A549 (cell line): ENCODE measurements at regions of chr13 and their contacts with region 1.

Region 1: GRCh38 chr13:75870397-75870903 is 234.3 kb downstream of the LMO7 start:
- DNase-seq: peak; percentile 14 to 15
- ATAC-seq: peak in 1 of 2 experiments; percentile 42; a peak in 2 of 6 replicates
- H3K4me3 ChIP-seq: peak overlapping the region; percentile 41
- H3K27ac ChIP-seq: peak overlapping the region; percentile 23 to 80; a peak in 5 of 6 replicates
- H3K4me1 ChIP-seq: peaks cover under 1% of the 10 kb centered on the region; the same call in 1 of the 3 replicates
- CTCF ChIP-seq: peak; percentile 73
- EP300 ChIP-seq: no peak
- POLR2A ChIP-seq: no peak
- RAD21 ChIP-seq: peak; percentile 70 to 79

Region 2: DNA sequence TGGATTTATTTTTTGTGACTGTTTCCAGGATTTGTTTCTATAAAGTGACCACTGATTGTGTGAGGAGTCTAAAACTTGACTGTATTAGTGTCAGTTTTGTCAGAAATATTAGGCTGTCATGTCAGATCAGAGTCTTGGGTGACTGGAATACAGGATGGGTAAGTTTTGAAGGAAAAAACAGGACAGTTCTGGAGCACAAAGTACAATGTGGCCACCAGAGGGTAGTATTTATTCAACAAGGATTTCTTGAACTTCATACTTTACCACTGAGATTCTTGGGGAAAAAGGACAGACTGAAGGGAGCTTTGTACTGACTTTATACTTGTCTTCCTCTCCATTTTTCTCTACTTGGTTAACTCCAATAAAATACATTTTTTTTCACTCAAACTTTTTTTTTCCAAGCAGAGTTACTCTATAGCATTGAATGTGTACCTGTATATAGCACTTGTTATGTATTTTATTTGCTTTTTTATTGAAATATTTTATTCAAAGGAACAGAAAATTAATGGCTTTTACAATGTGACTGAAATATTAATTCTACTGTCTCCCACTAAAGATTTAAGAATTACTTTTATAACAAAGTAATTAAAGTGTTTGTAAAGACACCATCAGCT is 183.2 kb before region 1 on chr13:
- CTCF ChIA-PET with region 1: interaction called, 14 read pairs
- POLR2A ChIA-PET with region 1: no interaction called
- DNase-seq: peak in 1 of 2 experiments; percentile 54
- ATAC-seq: peak; percentile 75 to 79
- H3K4me3 ChIP-seq: no peak overlapping the region
- H3K27ac ChIP-seq: no peak overlapping the region
- H3K4me1 ChIP-seq: peaks cover 34% of the 10 kb centered on the region
- CTCF ChIP-seq: peak; percentile 62
- EP300 ChIP-seq: no peak
- POLR2A ChIP-seq: no peak
- RAD21 ChIP-seq: peak; percentile 68 to 71

Region 3: DNA sequence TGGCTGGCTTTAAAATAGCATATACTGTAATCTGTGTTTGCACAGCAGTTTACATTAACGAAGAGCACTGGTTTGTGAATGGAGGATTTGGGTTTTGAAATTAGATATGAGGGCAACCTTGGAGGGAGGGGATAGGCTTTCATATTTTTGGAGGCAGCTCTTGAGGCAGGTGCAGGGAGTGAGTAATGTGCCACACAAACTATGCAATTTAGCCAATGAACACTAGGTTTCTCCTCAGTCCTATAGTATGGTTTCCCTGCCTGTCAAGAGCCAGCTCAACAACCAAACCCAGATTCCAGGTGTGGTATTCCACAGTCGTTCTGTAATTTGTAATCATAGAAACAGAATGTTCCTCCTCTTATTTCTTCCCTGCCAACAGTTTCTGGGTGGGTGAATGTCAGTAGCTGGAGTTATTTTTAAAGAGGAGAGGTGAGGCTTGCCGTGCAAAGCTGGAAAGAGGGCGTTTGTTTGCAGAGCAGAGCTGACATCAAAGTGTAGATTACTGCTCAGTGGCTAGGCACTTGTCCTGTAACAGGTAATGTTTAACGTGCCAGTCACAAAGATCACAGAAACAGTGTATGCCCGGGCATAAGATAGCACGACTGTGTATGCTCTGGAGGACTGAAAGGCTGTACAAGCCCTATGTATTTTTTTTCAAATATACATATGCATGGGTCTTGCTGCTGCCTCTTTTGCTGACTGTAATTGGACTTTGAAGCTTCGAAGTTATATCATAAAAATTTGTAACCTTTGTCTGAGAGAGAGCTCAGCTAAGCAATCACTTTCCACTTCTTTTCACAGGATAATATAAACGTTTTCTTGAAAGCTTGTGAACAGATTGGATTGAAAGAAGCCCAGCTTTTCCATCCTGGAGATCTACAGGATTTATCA is 110.1 kb before region 1 on chr13:
- CTCF ChIA-PET with region 1: interaction called, 11 read pairs
- POLR2A ChIA-PET with region 1: no interaction called
- DNase-seq: peak; percentile 50 to 75
- ATAC-seq: peak; percentile 92 to 96
- H3K4me3 ChIP-seq: peak overlapping the region; percentile 48
- H3K27ac ChIP-seq: peak overlapping the region; percentile 80 to 83
- H3K4me1 ChIP-seq: peaks cover 30% of the 10 kb centered on the region
- CTCF ChIP-seq: no peak
- EP300 ChIP-seq: no peak
- POLR2A ChIP-seq: no peak
- RAD21 ChIP-seq: peak in 1 of 2 experiments; percentile 25; a peak in 2 of 5 replicates

Region 4: DNA sequence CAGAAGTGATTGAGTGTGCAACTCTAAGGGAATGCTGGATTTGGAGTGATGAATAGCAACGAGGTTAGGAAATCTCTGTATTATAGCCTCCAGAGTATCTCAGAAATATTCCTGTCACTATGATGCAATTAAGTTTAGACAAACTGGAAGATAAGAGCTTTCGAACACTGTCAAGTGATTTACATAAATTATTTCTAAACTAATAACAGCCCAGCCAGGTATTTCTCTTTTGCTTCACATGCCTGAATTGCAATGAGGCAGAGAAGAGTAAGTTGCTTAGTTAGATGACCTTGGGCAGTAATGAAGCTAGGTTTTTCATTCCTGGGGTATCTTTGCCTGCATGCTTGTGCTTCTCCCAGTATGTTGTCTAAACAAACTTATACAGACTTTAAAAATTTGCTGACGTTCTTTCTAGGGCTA is 99.8 kb before region 1 on chr13:
- CTCF ChIA-PET with region 1: no interaction called
- POLR2A ChIA-PET with region 1: no interaction called
- DNase-seq: no peak
- ATAC-seq: peak in 1 of 2 experiments; percentile 39; a peak in 3 of 6 replicates
- H3K4me3 ChIP-seq: no peak overlapping the region
- H3K27ac ChIP-seq: peak overlapping the region; percentile 62 to 79
- H3K4me1 ChIP-seq: peaks cover 62% of the 10 kb centered on the region
- CTCF ChIP-seq: no peak
- EP300 ChIP-seq: no peak
- POLR2A ChIP-seq: no peak
- RAD21 ChIP-seq: no peak

Region 5: DNA sequence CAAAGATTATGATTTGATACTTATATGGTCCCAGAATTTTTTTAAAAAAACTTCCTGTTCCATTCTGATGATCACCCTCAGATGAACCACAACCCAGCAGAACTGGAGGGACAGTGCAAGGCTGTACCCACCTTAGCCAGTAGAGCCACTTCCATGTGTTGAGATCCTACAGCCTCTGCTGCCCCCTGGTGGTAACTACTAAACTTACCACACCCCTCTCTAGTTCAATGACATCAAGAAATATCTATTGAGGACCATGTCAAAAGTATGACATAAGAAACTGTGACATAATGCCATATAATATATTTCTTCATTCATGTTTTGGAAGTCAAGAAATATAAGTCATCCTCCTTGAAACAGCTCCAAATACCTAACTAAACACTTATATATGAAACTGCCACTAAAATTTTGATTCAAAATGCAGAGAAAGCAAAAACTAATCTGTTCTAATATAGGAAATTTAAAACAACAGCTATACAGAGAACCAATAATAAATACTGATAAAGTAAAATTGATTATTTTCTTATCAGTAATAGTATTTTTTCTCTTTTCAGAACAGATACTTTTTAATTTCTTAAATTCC is 603.2 kb after region 1 on chr13:
- CTCF ChIA-PET with region 1: interaction called, 70 read pairs
- POLR2A ChIA-PET with region 1: no interaction called
- DNase-seq: peak; percentile 22 to 77
- ATAC-seq: peak; percentile 97 to 99
- H3K4me3 ChIP-seq: no peak overlapping the region
- H3K27ac ChIP-seq: no peak overlapping the region
- H3K4me1 ChIP-seq: no peaks in the 10 kb centered on the region
- CTCF ChIP-seq: peak; percentile 70
- EP300 ChIP-seq: no peak
- POLR2A ChIP-seq: no peak
- RAD21 ChIP-seq: peak; percentile 83 to 88

Region 6: GRCh38 chr13:76903544-76904162 is 1033.2 kb after region 1 on chr13:
- CTCF ChIA-PET with region 1: interaction called, 14 read pairs
- POLR2A ChIA-PET with region 1: no interaction called
- DNase-seq: peak; percentile 30 to 74
- ATAC-seq: peak in 1 of 2 experiments; percentile 75; a peak in 3 of 6 replicates
- H3K4me3 ChIP-seq: no peak overlapping the region
- H3K27ac ChIP-seq: no peak overlapping the region
- H3K4me1 ChIP-seq: no peaks in the 10 kb centered on the region
- CTCF ChIP-seq: peak; percentile 82
- EP300 ChIP-seq: no peak
- POLR2A ChIP-seq: no peak
- RAD21 ChIP-seq: peak; percentile 87 to 90